ENCODE measurements at regions of chr7 and their contacts with region 1.

Region 1: DNA sequence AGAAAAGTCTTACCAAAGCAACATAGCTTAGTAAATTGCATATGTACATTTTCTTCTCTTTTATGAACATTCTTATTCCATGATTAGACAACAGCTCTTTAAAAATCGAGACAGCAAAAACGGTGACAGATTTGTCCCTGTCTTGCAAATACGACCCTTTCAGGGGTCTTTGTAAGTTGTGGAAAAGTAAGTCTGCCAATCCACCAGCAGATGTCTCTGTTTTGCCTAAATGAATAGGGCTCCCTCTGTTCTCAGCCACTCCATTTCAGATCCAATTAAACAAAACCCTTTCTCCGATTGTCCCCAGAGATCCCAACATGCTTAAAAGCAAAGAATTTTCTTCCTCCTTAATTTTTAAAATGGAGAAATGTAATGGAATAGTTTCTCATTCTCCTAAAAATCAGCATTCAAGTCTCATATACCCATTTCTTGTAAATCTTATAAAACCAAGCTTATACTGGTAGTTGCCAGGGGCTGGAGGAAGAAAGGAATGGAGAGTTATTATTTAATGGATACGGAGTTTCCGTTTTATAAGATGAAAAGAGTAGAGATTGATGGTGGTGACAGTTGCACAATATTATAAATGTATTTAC is 61.0 kb upstream of the NFE2L3 start:
- DNase-seq: no peak
- ATAC-seq: peak; percentile 68 to 77
- H3K4me3 ChIP-seq: no peak overlapping the region
- H3K27ac ChIP-seq: no peak overlapping the region
- H3K4me1 ChIP-seq: no peaks in the 10 kb centered on the region
- H3K27me3 ChIP-seq: no peaks in the 10 kb centered on the region

Region 2: DNA sequence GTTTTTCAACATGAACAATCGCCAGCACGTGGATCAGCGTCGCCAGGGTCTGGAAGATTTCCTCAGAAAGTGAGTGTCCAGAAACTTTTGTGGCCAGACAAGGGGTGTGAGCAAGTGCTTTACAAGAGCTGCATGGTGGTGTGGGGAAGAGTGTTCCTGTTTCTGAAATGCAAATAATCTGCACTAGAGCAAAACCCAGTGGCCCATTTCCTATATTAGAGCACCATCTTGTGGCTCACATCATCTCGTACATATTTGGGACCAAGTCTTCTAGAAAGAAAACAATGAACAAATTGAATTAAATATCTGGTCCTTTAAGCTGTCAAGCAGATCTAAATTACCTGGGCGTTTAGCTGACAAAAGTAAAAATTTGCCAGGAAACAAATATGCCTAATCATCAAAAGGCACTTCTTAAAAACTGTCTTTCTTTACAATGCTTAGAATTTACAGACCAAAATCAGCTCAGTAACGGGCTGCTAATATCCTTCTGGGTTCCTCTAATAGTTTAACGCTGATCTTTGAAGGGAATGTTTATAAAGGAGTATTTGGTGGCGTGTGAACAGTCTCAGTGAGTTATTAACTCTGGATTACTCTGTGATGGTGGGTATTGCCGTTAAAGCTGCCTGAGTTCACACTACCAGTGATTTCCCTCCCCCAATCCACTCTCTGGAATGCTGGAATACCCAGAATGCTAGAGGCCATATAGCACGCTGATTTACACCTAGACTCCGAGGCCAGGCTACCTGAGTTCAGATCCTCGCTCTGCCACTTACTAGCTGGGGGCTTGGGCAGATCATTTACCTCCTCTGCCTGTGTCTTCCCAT is 274.3 kb after region 1 on chr7:
- intact Hi-C with region 1: loop called (anchors 2 to 5 kb)
- DNase-seq: no peak
- ATAC-seq: peak; percentile 84 to 86
- H3K4me3 ChIP-seq: no peak overlapping the region
- H3K27ac ChIP-seq: no peak overlapping the region
- H3K4me1 ChIP-seq: no peaks in the 10 kb centered on the region
- H3K27me3 ChIP-seq: no peaks in the 10 kb centered on the region